ENCODE measurements at regions of chr1 and their contacts with region 1.

Region 1: GRCh38 chr1:225999227-225999911 is at the start of gene SDE2:
- H3K4me3 Mint-ChIP-seq: peak within 1 kb of the TSS; percentile 100
- H3K27ac Mint-ChIP-seq: peak within 1 kb of the TSS; percentile 96
- H3K4me1 Mint-ChIP-seq: peaks cover 47% of the 10 kb centered on the region
- H3K27me3 Mint-ChIP-seq: no peaks in the 10 kb centered on the region

Region 2: GRCh38 chr1:226029093-226029496 is 29.7 kb after region 1 on chr1:
- intact Hi-C with region 1: loop called (anchors 1 kb)
- H3K4me3 Mint-ChIP-seq: no peak overlapping the region
- H3K27ac Mint-ChIP-seq: peak overlapping the region; percentile 1
- H3K4me1 Mint-ChIP-seq: peaks cover 63% of the 10 kb centered on the region
- H3K27me3 Mint-ChIP-seq: no peaks in the 10 kb centered on the region

Region 3: GRCh38 chr1:226034482-226034881 is 35.1 kb after region 1 on chr1:
- intact Hi-C with region 1: loop called (anchors 1 kb)
- H3K4me3 Mint-ChIP-seq: no peak overlapping the region
- H3K27ac Mint-ChIP-seq: peak overlapping the region; percentile 92
- H3K4me1 Mint-ChIP-seq: peaks cover 50% of the 10 kb centered on the region
- H3K27me3 Mint-ChIP-seq: no peaks in the 10 kb centered on the region

Region 4: GRCh38 chr1:226062558-226063223 is 63.3 kb after region 1 on chr1 and contains the start of gene H3-3A:
- intact Hi-C with region 1: loop called (anchors 1 kb)
- H3K4me3 Mint-ChIP-seq: peak within 1 kb of the TSS; percentile 99
- H3K27ac Mint-ChIP-seq: peak within 1 kb of the TSS; percentile 99
- H3K4me1 Mint-ChIP-seq: peaks cover 40% of the 10 kb centered on the region
- H3K27me3 Mint-ChIP-seq: no peaks in the 10 kb centered on the region

Region 5: DNA sequence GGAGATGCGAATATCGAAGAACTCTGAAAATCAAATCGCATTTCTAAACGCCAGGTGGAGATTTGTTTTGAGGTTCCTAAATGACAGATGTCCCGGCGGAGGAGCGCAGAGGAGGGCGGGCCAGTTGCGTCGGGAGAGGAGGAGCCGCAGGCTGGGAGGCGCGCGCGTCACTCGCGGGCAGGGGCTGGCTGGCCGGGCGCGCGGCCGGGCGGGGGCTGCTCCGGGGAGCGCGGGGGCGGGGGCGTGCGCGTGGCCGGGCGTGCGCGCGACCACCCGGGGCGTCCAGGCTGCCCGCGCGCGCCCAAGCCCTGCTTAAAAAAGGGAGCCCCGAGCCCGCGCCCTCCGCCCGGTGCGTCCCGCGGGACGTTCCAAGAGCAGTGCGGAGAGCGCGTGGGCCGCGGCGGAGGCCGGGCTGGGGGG is 110.5 kb after region 1 on chr1:
- intact Hi-C with region 1: loop called (anchors 1 kb)
- H3K4me3 Mint-ChIP-seq: peak overlapping the region; percentile 82
- H3K27ac Mint-ChIP-seq: peak overlapping the region; percentile 96
- H3K4me1 Mint-ChIP-seq: peaks cover 35% of the 10 kb centered on the region
- H3K27me3 Mint-ChIP-seq: peaks cover 9% of the 10 kb centered on the region

Region 6: DNA sequence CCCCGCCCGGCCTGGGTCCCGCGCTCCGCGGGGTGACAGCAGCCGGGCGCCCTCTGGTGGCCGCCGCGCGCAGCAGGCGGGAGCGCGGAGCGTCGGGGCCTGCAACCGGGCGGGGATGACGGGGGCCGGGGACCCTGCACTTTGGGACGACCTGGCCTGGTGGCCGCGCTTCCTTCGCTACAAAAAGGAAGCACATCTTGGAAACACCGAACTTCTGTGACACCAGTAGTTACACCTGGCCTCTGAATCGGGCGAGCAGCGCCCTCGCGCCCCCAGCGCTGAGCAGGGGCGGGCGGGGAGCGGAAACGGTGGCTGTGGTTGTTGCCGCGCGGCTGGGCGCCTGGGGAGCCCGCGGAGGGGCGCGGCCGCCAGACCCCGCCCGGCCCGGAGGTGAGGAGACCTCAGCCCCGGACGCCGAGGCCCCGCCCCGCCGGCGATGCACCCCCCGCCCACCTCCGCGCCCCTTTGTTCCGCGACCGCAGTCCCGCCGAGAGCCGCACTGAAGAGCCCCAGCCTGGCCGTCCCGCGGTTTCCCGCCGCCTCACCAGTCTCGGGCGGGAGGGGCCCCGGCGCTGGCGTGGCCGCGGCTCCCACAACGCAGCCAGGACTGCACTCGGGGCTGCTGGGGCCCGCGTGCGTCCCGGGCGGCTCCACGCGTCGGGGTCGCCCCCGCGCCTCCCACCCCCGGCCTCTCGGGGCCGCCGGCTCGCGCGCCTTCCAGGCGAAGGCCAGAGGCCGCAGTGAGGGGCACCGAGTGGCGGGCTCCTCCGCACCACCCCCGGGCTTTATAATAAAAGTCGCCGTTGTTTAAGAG is 122.4 kb after region 1 on chr1:
- intact Hi-C with region 1: loop called (anchors 5 kb)
- H3K4me3 Mint-ChIP-seq: peak overlapping the region; percentile 74
- H3K27ac Mint-ChIP-seq: peak overlapping the region; percentile 78
- H3K4me1 Mint-ChIP-seq: peaks cover 27% of the 10 kb centered on the region
- H3K27me3 Mint-ChIP-seq: peaks cover 49% of the 10 kb centered on the region

Region 7: DNA sequence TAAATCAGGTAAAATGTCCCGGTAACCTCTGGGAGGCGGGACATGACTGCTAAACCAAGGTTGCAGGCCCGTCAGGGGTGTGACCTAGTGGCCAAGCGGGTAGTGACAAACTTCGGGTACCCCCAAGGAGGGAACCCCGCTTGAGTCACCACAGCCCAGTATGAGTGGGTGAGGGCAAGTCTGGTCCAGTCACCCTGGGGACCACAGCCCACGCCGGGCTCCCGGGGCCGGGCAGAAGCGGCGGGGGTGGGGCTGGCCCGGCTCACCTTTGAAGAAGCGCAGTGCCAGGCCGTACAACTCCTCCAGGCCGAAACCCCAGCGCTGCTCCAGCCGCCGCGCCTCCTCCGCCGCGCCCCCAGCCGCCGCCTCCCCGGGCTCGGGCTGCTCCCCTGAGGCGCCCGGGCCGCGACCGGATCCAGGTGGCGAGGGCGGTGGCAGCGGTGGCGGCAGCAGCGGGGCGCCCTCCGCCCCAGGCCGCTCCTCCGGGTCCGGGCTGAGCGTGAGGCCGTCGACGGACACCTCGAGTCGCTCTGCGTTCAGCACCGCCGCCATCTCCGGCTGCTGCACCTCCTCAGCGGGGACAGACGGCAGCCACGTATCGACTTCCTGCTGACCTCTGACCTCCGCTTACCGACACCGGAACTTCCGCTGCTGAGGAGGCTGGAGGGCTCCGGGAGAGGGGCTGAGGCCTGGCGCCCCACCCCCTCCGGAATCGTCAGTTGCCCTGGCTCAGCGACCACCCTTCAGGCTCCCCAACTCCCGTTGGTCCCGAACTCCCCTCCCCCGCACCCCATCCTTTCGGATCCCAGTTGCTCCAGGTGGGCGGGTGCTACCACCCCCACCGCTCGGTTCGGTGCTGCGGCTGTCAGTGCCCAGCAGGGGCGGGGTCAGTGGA is 187.0 kb after region 1 on chr1 and contains the start of gene ACBD3:
- intact Hi-C with region 1: loop called (anchors 5 kb)
- H3K4me3 Mint-ChIP-seq: peak within 1 kb of the TSS; percentile 88
- H3K27ac Mint-ChIP-seq: peak within 1 kb of the TSS; percentile 91
- H3K4me1 Mint-ChIP-seq: peaks cover 38% of the 10 kb centered on the region
- H3K27me3 Mint-ChIP-seq: no peaks in the 10 kb centered on the region